H1 (cell line): ENCODE measurements at regions of chr17 and their contacts with region 1.

Region 1: GRCh38 chr17:17151962-17152361 is 54.2 kb downstream of the PLD6 start:
- DNase-seq: no peak
- H3K4me3 ChIP-seq: no peak overlapping the region
- H3K27ac ChIP-seq: no peak overlapping the region
- H3K4me1 ChIP-seq: no peaks in the 10 kb centered on the region
- H3K27me3 ChIP-seq: no peaks in the 10 kb centered on the region
- CTCF ChIP-seq: no peak
- EP300 ChIP-seq: no peak
- POLR2A ChIP-seq: no peak
- RAD21 ChIP-seq: no peak

Region 2: GRCh38 chr17:16873174-16874035 is 278.6 kb before region 1 on chr17:
- CTCF ChIA-PET with region 1: no interaction called
- POLR2A ChIA-PET with region 1: no interaction called
- DNase-seq: peak in 1 of 2 experiments; percentile 86
- H3K4me3 ChIP-seq: no peak overlapping the region
- H3K27ac ChIP-seq: no peak overlapping the region
- H3K4me1 ChIP-seq: no peaks in the 10 kb centered on the region
- H3K27me3 ChIP-seq: no peaks in the 10 kb centered on the region
- CTCF ChIP-seq: peak; percentile 80 to 85 (median 85)
- EP300 ChIP-seq: no peak
- POLR2A ChIP-seq: no peak
- RAD21 ChIP-seq: peak; percentile 77 to 82

Region 3: DNA sequence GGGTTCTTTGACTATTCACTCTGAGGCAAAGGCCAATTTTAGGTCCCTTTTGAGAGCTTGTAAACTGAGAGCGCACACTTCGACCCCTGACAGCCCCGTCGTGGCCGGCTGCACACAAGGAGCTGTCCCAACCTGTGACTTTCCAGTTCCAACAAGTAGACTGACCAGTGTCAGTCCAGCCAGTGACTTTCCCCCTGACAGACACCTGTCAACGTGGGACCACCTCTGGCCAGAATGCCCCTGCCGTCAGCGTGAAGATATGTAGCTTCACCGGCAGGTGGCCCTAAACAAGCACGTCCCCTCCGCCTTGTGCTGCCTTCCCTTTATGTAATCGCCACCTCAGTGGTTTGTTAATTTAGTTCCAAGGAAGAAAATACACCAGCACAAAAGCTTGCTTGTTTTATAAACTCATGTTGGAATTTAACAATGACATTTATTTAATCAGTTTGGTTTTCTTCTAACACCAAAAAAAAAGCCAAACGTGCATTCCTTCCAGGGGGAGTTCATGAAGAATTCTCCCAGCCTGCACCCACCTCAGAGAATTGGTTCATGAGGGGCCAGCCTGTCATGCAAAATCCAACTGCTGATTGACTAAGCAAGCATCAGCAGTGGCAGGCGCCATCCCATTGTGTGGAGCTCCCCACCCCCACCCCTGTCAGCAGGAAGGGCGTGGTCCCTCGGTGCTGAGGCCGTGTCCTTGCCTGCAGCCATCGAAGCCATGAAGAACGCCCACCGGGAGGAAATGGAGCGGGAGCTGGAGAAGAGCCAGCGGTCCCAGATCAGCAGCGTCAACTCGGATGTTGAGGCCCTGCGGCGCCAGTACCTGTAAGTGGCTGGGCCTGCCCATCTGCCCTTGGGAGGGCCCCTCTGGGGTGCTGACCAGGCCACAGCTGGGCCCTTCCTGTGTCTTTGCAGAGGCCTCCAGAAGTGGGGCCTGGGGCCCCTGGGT is 20.3 kb after region 1 on chr17:
- CTCF ChIA-PET with region 1: interaction called, 10 read pairs
- POLR2A ChIA-PET with region 1: no interaction called
- DNase-seq: no peak
- H3K4me3 ChIP-seq: no peak overlapping the region
- H3K27ac ChIP-seq: no peak overlapping the region
- H3K4me1 ChIP-seq: no peaks in the 10 kb centered on the region
- H3K27me3 ChIP-seq: no peaks in the 10 kb centered on the region; a peak in 1 of 7 replicates
- CTCF ChIP-seq: peak in 1 of 3 experiments; percentile 9; a peak in 2 of 4 replicates
- EP300 ChIP-seq: no peak
- POLR2A ChIP-seq: no peak
- RAD21 ChIP-seq: no peak; a peak in 1 of 4 replicates

Region 4: DNA sequence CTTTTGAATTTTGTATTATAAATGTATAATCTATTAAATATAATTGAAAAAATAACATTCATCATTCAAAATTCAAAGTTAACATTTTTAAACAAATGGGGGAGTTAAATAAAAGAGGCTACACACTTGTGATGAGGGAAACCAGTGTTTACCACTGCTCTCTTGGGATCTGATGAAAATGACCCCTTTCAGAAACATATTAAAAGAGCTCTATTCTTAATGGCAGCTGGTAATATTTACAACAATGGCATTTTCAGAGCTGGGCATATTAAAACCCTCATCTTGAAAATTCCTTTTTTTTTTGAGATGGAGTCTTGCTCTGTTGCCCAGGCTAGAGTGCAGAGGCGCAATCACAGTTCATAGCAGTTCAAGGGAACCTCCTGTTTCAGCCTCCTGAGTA is 104.4 kb after region 1 on chr17:
- CTCF ChIA-PET with region 1: no interaction called
- POLR2A ChIA-PET with region 1: no interaction called
- DNase-seq: no peak
- H3K4me3 ChIP-seq: no peak overlapping the region
- H3K27ac ChIP-seq: no peak overlapping the region
- H3K4me1 ChIP-seq: no peaks in the 10 kb centered on the region
- H3K27me3 ChIP-seq: no peaks in the 10 kb centered on the region
- CTCF ChIP-seq: no peak
- EP300 ChIP-seq: no peak
- POLR2A ChIP-seq: no peak
- RAD21 ChIP-seq: no peak